HCT116 (cell line): ENCODE measurements at regions of chr17 and their contacts with region 1.

Region 1: GRCh38 chr17:36601303-36602029 is at the start of gene MRM1:
- DNase-seq: peak; percentile 91
- ATAC-seq: peak; percentile 88
- H3K4me3 ChIP-seq: peak within 1 kb of the TSS; percentile 91 to 98
- H3K27ac ChIP-seq: peak within 1 kb of the TSS; percentile 81
- H3K4me1 ChIP-seq: peaks cover 5 to 22% of the 10 kb centered on the region in 2 experiments; a peak in 3 of 4 replicates
- H3K27me3 ChIP-seq: no peaks in the 10 kb centered on the region
- CTCF ChIP-seq: no peak
- POLR2A ChIP-seq: peak; percentile 88
- RAD21 ChIP-seq: no peak
- total RNA-seq, gene MRM1: 14.5 TPM

Region 2: GRCh38 chr17:36534840-36535668 is 66.4 kb before region 1 on chr17 and contains the starts of genes MYO19 and PIGW:
- CTCF ChIA-PET with region 1: interaction called, 6 read pairs
- POLR2A ChIA-PET with region 1: interaction called, 10 read pairs
- RAD21 ChIA-PET with region 1: no interaction called
- intact Hi-C with region 1: no loop called
- DNase-seq: peak; percentile 78
- ATAC-seq: peak; percentile 86
- H3K4me3 ChIP-seq: peak within 1 kb of the TSS; percentile 63 to 90
- H3K27ac ChIP-seq: peak within 1 kb of the TSS; percentile 99
- H3K4me1 ChIP-seq: peaks cover 8 to 21% of the 10 kb centered on the region in 2 experiments
- H3K27me3 ChIP-seq: no peaks in the 10 kb centered on the region
- CTCF ChIP-seq: no peak
- POLR2A ChIP-seq: peak; percentile 75
- RAD21 ChIP-seq: no peak; the same call in 1 of the 2 replicates
- total RNA-seq, gene MYO19: 167 TPM
- total RNA-seq, gene PIGW: 16.4 TPM

Region 3: GRCh38 chr17:36545465-36546417 is 55.7 kb before region 1 on chr17:
- CTCF ChIA-PET with region 1: interaction called, 4 read pairs
- POLR2A ChIA-PET with region 1: interaction called, 6 read pairs
- RAD21 ChIA-PET with region 1: interaction called in 1 of 2 experiments, 5 read pairs
- intact Hi-C with region 1: loop called (anchors 5 kb)
- DNase-seq: peak; percentile 93
- ATAC-seq: peak; percentile 83
- H3K4me3 ChIP-seq: peak overlapping the region; percentile 80 to 97
- H3K27ac ChIP-seq: peak overlapping the region; percentile 86
- H3K4me1 ChIP-seq: peaks cover 11 to 26% of the 10 kb centered on the region in 2 experiments; a peak in 3 of 4 replicates
- H3K27me3 ChIP-seq: no peaks in the 10 kb centered on the region
- CTCF ChIP-seq: no peak
- POLR2A ChIP-seq: no peak
- RAD21 ChIP-seq: no peak

Region 4: DNA sequence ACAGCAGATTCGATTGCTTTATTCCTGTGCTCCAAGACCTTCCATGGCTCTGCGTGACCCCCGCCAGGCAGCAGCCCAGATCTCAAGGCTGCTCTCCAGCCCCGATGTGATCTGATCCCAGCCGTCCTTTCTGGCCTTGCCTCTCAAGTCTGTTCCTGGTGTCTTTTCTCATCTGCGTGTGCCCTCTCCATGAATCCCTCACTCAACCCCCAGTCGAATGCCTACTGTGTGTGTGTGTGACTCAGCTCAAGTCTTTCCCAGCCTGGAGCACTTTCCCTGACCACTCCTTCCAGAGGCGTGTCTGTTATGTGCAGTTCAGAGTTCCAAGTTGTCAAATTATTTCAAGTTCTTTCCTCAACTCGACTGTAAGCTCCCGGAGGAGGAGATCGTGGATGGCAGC is 64.0 kb after region 1 on chr17:
- CTCF ChIA-PET with region 1: no interaction called
- POLR2A ChIA-PET with region 1: no interaction called
- RAD21 ChIA-PET with region 1: no interaction called
- intact Hi-C with region 1: no loop called
- DNase-seq: no peak
- ATAC-seq: peak; percentile 33; the same call in 1 of the 2 replicates
- H3K4me3 ChIP-seq: no peak overlapping the region
- H3K27ac ChIP-seq: no peak overlapping the region
- H3K4me1 ChIP-seq: peaks cover 0 to 17% of the 10 kb centered on the region in 2 experiments; a peak in 2 of 4 replicates
- H3K27me3 ChIP-seq: 0 out of 2 replicates have a peak, but pooled peaks cover 3% of the 10 kb centered on the region
- CTCF ChIP-seq: no peak
- POLR2A ChIP-seq: no peak
- RAD21 ChIP-seq: no peak